GM10248 (cell line): ENCODE measurements at regions of chr5 and their contacts with region 1.

Region 1: GRCh38 chr5:42483472-42484154 is 60.4 kb downstream of the GHR start:
- DNase-seq: peak; percentile 26
- CTCF ChIP-seq: no peak

Region 2: GRCh38 chr5:42495914-42496313 is 12.3 kb after region 1 on chr5:
- CTCF ChIA-PET with region 1: interaction called, 13 read pairs
- POLR2A ChIA-PET with region 1: no interaction called
- DNase-seq: no peak
- CTCF ChIP-seq: no peak

Region 3: DNA sequence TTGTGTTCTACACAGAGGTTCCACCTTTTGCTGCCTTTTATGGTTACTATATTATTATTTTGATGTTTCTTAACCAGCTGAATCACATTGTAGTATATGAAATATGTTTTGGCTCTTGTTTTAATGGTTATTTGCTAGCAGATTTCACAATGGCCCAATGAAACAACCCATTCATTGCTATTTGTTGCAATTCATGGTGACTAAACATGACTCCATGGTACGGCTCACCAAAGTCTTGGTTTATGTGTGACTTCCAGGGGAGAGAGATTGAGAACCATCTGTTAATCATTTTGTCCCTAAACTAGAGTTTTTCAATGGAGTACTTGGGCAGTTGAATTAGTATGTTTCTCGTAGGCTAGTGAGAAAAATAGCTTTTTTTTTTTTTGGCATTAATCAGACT is 48.0 kb after region 1 on chr5:
- CTCF ChIA-PET with region 1: no interaction called
- POLR2A ChIA-PET with region 1: no interaction called
- DNase-seq: no peak
- CTCF ChIP-seq: no peak